WTC11 (cell line): ENCODE measurements at regions of chr6 and their contacts with region 1.

Region 1: DNA sequence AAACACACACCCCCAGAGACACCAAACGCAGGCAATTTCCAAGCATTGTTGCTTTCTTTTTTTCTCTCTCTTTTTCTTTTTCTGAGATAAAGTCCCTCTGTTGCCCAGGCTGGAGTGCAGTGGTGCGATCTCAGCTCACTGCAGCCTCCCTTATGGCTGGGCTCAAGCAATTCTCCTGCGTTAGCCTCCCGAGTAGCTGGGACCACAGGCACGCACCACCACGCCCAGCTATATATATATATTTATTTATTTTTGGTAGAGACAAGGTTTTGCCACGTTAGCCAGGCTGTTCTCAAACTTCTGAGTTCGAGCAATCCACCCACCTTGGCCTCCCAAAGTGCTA is 14.0 kb upstream of the SRSF3 start:
- DNase-seq: no peak
- ATAC-seq: no peak
- H3K4me3 Mint-ChIP-seq: no peak overlapping the region
- H3K27ac Mint-ChIP-seq: no peak overlapping the region; the same call in 1 of the 2 replicates
- H3K4me1 Mint-ChIP-seq: peaks cover 3% of the 10 kb centered on the region; the same call in 1 of the 2 replicates
- H3K27me3 Mint-ChIP-seq: no peaks in the 10 kb centered on the region
- CTCF ChIP-seq: no peak

Region 2: GRCh38 chr6:35173427-35174087 is 1406.6 kb before region 1 on chr6:
- CTCF ChIA-PET with region 1: no interaction called
- POLR2A ChIA-PET with region 1: no interaction called
- DNase-seq: no peak
- ATAC-seq: peak; percentile 32
- H3K4me3 Mint-ChIP-seq: no peak overlapping the region
- H3K27ac Mint-ChIP-seq: no peak overlapping the region
- H3K4me1 Mint-ChIP-seq: peaks cover 4% of the 10 kb centered on the region
- H3K27me3 Mint-ChIP-seq: peaks cover 3% of the 10 kb centered on the region; the same call in 1 of the 2 replicates
- CTCF ChIP-seq: no peak

Region 3: GRCh38 chr6:36594029-36594815 is 14.1 kb after region 1 on chr6 and contains the start of gene SRSF3:
- CTCF ChIA-PET with region 1: no interaction called
- POLR2A ChIA-PET with region 1: interaction called, 13 read pairs
- DNase-seq: peak; percentile 94
- ATAC-seq: peak; percentile 90
- H3K4me3 Mint-ChIP-seq: peak within 1 kb of the TSS; percentile 98
- H3K27ac Mint-ChIP-seq: peak within 1 kb of the TSS; percentile 100
- H3K4me1 Mint-ChIP-seq: peaks cover 33% of the 10 kb centered on the region
- H3K27me3 Mint-ChIP-seq: peaks cover 4% of the 10 kb centered on the region
- CTCF ChIP-seq: no peak
- total RNA-seq, gene SRSF3: 554 to 645 TPM (median 644 TPM) in 3 replicates